Psoas muscle (tissue), 8 donors: ENCODE measurements at regions of chrX and their contacts with region 1.

Region 1: GRCh38 chrX:84729809-84730208 is 227.6 kb upstream of the HDX start:
- DNase-seq: no peak
- ATAC-seq: peak; percentile 61 to 81 (median 73)
- H3K4me3 ChIP-seq: no peak overlapping the region
- H3K27ac ChIP-seq: no peak overlapping the region
- H3K4me1 ChIP-seq: no peaks in the 10 kb centered on the region
- H3K27me3 ChIP-seq: no peaks in the 10 kb centered on the region
- CTCF ChIP-seq: peak; percentile 72

Region 2: GRCh38 chrX:84760560-84760959 is 30.8 kb after region 1 on chrX:
- intact Hi-C with region 1: no loop called
- DNase-seq: no peak
- ATAC-seq: no peak
- H3K4me3 ChIP-seq: no peak overlapping the region
- H3K27ac ChIP-seq: no peak overlapping the region
- H3K4me1 ChIP-seq: no peaks in the 10 kb centered on the region
- H3K27me3 ChIP-seq: no peaks in the 10 kb centered on the region
- CTCF ChIP-seq: no peak

Region 3: GRCh38 chrX:85052636-85053343 is 323.0 kb after region 1 on chrX:
- intact Hi-C with region 1: loop called in 1 of 2 experiments (anchors 5 kb)
- DNase-seq: no peak
- ATAC-seq: peak in 3 of 4 donors; percentile 57 to 82 (median 74)
- H3K4me3 ChIP-seq: no peak overlapping the region
- H3K27ac ChIP-seq: no peak overlapping the region
- H3K4me1 ChIP-seq: no peaks in the 10 kb centered on the region
- H3K27me3 ChIP-seq: no peaks in the 10 kb centered on the region
- CTCF ChIP-seq: peak; percentile 23